Activated CD8-positive, alpha-beta T cell treated with anti-CD3 and anti-CD28 coated beads, Interleukin-2, amount 10 ng/mL, durations not matched to agents 7 days and 5 days (primary cell): ENCODE measurements at regions of chr17 and their contacts with region 1.

Region 1: GRCh38 chr17:76501018-76501826 is at the start of gene RHBDF2:
- DNase-seq: peak; percentile 96
- ATAC-seq: peak; percentile 89
- H3K4me3 Mint-ChIP-seq: peak within 1 kb of the TSS; percentile 89
- H3K27ac Mint-ChIP-seq: peak within 1 kb of the TSS; percentile 95
- H3K4me1 Mint-ChIP-seq: peaks cover 61% of the 10 kb centered on the region
- H3K27me3 Mint-ChIP-seq: no peaks in the 10 kb centered on the region
- total RNA-seq, gene RHBDF2: 51.4 to 52.1 TPM

Region 2: DNA sequence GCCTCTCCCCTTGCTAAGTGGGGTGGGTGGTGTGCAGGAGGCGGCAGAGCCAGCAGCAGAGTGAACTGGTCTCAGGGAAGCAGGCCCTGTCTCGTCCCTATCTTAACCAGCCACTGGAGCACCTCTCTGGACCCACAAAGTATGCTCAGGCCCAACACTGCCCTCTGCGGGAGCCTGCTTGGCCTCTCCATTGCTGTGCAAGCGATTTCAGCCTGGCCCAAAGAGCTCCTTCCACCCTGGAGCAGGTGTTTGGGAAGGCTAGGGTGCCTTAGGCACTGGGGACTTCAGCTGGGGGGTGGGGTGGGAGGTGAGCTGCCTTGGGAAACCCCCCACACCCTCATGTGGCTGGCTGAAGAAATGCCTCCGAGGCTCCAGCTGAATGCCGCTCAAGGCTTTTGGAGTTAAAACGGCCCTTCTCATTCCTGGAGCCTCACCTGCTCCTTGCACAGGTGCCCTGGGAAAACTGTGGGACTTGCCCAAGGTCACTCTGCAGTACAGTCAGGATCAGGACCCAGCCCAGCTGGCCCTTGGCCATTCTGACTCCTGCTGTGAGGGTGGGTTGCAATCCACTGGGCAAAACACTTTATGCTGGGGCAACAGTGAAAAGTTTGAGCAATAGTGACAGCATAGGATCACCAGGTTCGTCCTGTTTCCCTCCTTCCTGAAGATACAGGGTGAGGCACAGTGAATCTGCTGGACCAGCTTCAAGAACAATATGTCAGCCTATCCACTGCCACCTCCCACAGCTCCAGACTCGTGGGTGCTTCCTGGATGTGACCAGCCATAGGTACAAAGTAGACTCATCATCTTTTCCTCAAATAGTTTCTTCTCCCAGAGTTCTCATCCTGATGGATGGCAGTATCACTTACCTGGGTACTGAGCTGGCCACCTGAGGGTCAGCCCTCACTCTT is 42.4 kb before region 1 on chr17:
- CTCF ChIA-PET with region 1: interaction called, 184 read pairs
- POLR2A ChIA-PET with region 1: no interaction called
- DNase-seq: no peak
- ATAC-seq: no peak
- H3K4me3 Mint-ChIP-seq: no peak overlapping the region
- H3K27ac Mint-ChIP-seq: no peak overlapping the region
- H3K4me1 Mint-ChIP-seq: no peaks in the 10 kb centered on the region
- H3K27me3 Mint-ChIP-seq: peaks cover 3% of the 10 kb centered on the region